PC-9 (cell line): ENCODE measurements at regions of chr14 and their contacts with region 1.

Region 1: GRCh38 chr14:63641473-63642228 is at the start of gene WDR89:
- DNase-seq: peak; percentile 99
- H3K4me3 ChIP-seq: peak within 1 kb of the TSS; percentile 69
- H3K27ac ChIP-seq: peak within 1 kb of the TSS; percentile 90
- H3K4me1 ChIP-seq: peaks cover 30% of the 10 kb centered on the region
- H3K27me3 ChIP-seq: no peaks in the 10 kb centered on the region
- CTCF ChIP-seq: peak; percentile 91
- total RNA-seq, gene WDR89: 18.2 and 18.6 TPM in 2 replicates

Region 2: GRCh38 chr14:63164108-63164683 is 477.5 kb before region 1 on chr14:
- CTCF ChIA-PET with region 1: no interaction called
- POLR2A ChIA-PET with region 1: no interaction called
- intact Hi-C with region 1: no loop called
- DNase-seq: peak; percentile 34 to 38
- H3K4me3 ChIP-seq: no peak overlapping the region
- H3K27ac ChIP-seq: no peak overlapping the region
- H3K4me1 ChIP-seq: no peaks in the 10 kb centered on the region
- H3K27me3 ChIP-seq: no peaks in the 10 kb centered on the region
- CTCF ChIP-seq: no peak

Region 3: GRCh38 chr14:63388763-63389431 is 252.8 kb before region 1 on chr14:
- CTCF ChIA-PET with region 1: interaction called, 3 read pairs
- POLR2A ChIA-PET with region 1: no interaction called
- intact Hi-C with region 1: loop called (anchors 2 kb)
- DNase-seq: peak in 1 of 2 experiments; percentile 57
- H3K4me3 ChIP-seq: no peak overlapping the region
- H3K27ac ChIP-seq: no peak overlapping the region
- H3K4me1 ChIP-seq: no peaks in the 10 kb centered on the region
- H3K27me3 ChIP-seq: no peaks in the 10 kb centered on the region
- CTCF ChIP-seq: peak; percentile 84

Region 4: DNA sequence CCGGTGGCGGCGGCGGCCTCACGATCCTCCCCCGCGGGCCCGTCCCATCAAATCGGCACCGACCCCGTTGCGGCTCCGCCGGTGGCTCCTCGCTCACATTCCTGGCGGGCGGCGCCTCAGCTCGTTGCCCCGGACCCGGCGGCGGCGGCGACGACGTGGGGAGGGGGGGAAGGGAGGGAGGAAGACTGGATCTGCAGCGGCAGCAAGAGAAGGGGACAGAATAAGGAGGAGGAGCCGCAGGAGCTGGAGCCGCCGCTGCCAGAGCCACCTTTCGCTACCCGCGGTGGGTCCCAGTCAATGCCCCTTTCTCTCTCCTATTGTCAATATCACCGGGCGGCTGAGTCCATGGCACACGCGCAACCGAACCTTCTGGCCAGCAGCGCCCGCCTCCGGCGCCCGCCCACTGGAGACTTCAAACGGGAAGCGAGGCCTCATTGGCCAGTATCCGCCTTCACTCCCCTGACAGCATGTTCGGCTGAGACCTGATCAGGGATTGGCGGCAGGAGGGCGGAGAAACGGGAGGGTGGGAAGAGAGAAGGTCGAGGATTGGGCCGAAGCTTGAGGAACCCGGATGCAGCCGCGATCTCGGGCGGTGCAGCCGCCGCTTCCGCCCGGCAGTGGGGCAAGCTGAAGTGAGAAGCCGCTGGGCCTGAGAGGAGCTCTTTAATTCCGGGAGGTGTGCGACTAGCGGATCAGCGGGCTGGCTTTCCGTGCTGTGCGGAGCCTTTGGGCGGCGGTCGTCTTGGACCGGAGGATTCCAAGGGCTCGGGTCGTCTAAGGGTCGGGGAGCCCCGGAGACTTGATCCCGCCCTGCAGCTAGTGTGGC is 98.4 kb before region 1 on chr14 and contains the start of gene PPP2R5E:
- CTCF ChIA-PET with region 1: no interaction called
- POLR2A ChIA-PET with region 1: interaction called, 43 read pairs
- intact Hi-C with region 1: loop called (anchors 2 kb)
- DNase-seq: peak; percentile 97 to 99
- H3K4me3 ChIP-seq: peak within 1 kb of the TSS; percentile 82
- H3K27ac ChIP-seq: peak within 1 kb of the TSS; percentile 22
- H3K4me1 ChIP-seq: peaks cover 22% of the 10 kb centered on the region
- H3K27me3 ChIP-seq: no peaks in the 10 kb centered on the region
- CTCF ChIP-seq: no peak
- total RNA-seq, gene PPP2R5E: 66.4 and 67.0 TPM in 2 replicates

Region 5: DNA sequence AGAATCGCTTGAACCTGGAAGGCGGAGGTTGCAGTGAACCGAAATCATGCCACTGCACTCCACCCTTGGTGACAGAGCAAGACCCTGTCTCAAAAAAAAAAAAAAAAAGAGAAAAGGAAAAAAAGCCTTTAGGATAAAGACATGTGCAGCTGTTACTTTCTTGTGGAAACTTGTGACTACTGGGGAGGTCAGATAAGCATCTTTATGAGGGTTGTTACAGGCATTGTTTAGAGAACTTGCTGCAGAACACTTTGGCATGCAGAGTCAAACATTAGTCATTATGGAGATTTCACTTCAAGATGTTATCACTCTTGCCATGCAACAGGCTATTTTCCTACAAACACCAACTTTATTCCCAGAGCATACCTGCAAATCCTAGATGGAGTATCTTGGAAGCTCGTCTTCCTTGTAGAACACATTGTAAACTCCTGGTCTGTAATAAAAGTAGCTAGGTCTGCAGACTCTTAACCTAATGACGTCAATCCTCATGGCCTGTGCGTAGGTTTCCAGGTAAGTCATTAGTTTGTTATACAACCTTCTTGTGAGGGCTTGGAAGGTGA is 36.2 kb after region 1 on chr14:
- CTCF ChIA-PET with region 1: interaction called, 3 read pairs
- POLR2A ChIA-PET with region 1: interaction called, 14 read pairs
- intact Hi-C with region 1: no loop called
- DNase-seq: peak; percentile 51 to 97
- H3K4me3 ChIP-seq: no peak overlapping the region
- H3K27ac ChIP-seq: peak overlapping the region; percentile 29
- H3K4me1 ChIP-seq: peaks cover 26% of the 10 kb centered on the region
- H3K27me3 ChIP-seq: no peaks in the 10 kb centered on the region
- CTCF ChIP-seq: no peak

Region 6: GRCh38 chr14:63770187-63770807 is 128.6 kb after region 1 on chr14:
- CTCF ChIA-PET with region 1: interaction called, 6 read pairs
- POLR2A ChIA-PET with region 1: interaction called, 7 read pairs
- intact Hi-C with region 1: loop called (anchors 1 kb)
- DNase-seq: peak; percentile 36 to 50
- H3K4me3 ChIP-seq: no peak overlapping the region
- H3K27ac ChIP-seq: no peak overlapping the region
- H3K4me1 ChIP-seq: no peaks in the 10 kb centered on the region
- H3K27me3 ChIP-seq: no peaks in the 10 kb centered on the region
- CTCF ChIP-seq: peak; percentile 84